HEK293 (cell line): ENCODE measurements at regions of chr20 and their contacts with region 1.

Region 1: DNA sequence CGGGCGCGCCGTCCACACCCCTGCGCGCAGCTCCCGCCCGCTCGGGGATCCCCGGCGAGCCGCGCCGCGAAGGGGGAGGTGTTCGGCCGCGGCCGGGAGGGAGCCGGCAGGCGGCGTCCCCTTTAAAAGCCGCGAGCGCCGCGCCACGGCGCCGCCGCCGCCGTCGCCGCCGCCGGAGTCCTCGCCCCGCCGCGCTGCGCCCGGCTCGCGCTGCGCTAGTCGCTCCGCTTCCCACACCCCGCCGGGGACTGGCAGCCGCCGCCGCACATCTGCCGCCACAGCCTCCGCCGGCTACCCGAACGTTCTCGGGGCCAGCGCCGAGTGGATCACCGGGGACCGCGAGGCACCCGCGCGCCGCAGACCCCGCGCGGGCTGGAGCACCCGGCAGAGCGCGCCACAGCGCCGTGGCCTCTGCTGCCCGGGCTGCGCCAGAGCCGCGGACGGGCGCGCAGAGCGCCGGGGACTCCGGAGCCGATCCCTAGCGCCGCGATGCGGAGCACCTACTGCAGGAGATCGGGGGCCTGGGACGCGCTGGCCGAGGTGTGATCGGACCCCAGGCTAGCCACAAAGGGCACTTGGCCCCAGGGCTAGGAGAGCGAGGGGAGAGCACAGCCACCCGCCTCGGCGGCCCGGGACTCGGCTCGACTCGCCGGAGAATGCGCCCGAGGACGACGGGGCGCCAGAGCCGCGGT is at the start of gene BMP2:
- H3K4me3 ChIP-seq: peak within 1 kb of the TSS; percentile 92
- H3K27ac ChIP-seq: peak within 1 kb of the TSS; percentile 87; the same call in 1 of the 2 replicates
- H3K4me1 ChIP-seq: no peaks in the 10 kb centered on the region
- CTCF ChIP-seq: peak; percentile 14; the same call in 1 of the 2 replicates

Region 2: GRCh38 chr20:6636209-6637159 is 131.2 kb before region 1 on chr20:
- CTCF ChIA-PET with region 1: interaction called, 21 read pairs
- POLR2A ChIA-PET with region 1: interaction called, 3 read pairs
- H3K4me3 ChIP-seq: no peak overlapping the region
- H3K27ac ChIP-seq: no peak overlapping the region
- H3K4me1 ChIP-seq: no peaks in the 10 kb centered on the region
- CTCF ChIP-seq: no peak

Region 3: DNA sequence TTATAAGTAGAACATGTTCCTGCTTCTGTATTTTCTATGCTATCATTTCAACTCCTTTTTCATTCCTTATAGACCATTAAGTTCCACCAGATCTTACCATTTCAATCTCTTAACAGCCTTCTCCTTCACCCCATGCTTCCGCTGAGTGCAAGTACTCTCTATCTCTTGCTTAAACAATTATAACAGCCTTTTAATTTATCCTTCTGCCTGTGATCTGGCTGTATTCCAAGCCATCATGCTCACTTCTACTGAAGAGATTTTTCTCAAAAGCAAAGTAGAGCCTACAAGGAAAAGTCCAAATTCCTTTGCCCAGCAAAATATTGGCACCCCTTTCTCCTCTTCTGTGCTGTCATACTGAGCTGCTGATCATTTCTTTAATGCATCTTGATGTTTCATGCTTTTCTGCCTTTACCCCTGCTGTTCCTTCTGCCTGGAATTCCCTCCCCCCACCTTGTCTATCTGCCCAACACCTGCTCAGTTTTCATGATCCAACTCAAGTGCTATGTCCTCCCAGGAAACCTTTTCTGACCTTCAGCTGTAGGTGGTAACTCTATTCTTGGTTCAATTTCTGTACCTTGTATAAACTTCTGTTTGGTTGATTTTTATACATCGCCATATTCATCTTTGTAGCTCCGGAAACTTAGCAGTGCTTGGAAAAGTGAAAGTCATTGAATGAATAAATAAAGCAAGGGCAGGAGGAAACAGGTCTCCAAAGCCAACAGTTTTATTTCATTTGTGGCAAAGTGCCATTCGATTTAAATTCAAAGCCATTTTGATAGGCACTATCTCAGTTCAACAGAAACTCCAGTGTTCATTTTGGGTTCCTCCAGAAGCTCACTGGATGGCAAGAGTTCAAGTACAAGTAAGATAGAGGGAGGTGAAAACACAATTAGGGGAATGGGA is 10.7 kb before region 1 on chr20:
- CTCF ChIA-PET with region 1: interaction called, 16 read pairs
- POLR2A ChIA-PET with region 1: no interaction called
- H3K4me3 ChIP-seq: no peak overlapping the region
- H3K27ac ChIP-seq: no peak overlapping the region
- H3K4me1 ChIP-seq: peaks cover 4% of the 10 kb centered on the region; the same call in 1 of the 2 replicates
- CTCF ChIP-seq: no peak

Region 4: GRCh38 chr20:6780433-6781190 is 12.9 kb after region 1 on chr20:
- CTCF ChIA-PET with region 1: interaction called, 4 read pairs
- POLR2A ChIA-PET with region 1: interaction called, 15 read pairs
- H3K4me3 ChIP-seq: no peak overlapping the region
- H3K27ac ChIP-seq: no peak overlapping the region
- H3K4me1 ChIP-seq: no peaks in the 10 kb centered on the region
- CTCF ChIP-seq: no peak